SK-N-SH (cell line): ENCODE measurements at regions of chrX and their contacts with region 1.

Region 1: DNA sequence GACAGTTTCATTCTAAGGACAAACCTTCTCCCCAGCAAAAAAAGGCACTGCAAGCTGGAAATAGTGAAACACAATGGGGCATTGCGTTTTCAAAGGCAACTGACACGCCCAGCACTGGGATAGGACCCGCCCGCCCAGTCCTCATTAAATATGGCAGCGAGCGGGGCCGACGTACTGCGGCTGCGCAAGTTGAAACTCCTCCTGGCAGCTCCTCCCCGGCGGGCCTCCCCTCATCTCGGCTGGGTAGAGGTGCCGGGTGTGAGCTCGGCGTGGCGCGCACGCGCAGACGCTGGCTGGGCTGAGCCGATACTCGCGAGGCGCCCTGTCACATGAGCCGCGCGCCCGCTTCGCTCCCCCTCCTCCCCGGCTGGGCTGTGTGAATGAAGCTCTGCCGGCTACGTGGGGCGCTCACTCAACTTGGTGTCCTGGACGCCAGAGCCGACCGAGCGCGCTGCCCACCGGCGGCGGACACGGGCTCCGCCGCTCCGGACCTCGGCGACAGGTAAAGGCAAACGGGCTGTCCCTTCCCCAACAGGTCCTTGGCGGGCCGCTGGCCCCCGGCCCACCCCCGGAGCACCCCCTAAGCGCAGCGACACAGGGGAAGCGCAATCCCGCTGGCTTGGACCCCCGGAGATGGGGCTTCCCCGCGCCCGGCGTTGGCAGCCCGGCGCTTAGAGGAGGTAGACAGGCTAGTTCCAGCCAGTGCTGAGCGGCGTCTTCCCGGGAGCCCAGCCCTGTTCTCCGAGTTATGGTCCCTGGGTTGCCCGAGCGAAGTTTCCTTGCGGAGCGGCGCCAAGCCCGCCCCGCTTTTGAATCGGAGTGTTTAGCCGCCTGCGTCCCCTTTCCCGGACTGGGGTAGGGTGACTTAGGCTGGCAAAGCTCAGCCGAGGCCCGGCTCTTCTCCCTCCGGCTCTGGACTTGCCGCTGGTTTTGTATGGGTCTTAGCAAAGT is at the start of gene CLCN5:
- DNase-seq: peak; percentile 92
- H3K4me3 ChIP-seq: peak within 1 kb of the TSS; percentile 60 to 79
- H3K27ac ChIP-seq: peak within 1 kb of the TSS; percentile 41 to 62; a peak in 3 of 4 replicates
- H3K4me1 ChIP-seq: peaks cover 0 to 2% of the 10 kb centered on the region in 2 experiments; a peak in 1 of 4 replicates
- H3K27me3 ChIP-seq: no peaks in the 10 kb centered on the region
- CTCF ChIP-seq: no peak
- EP300 ChIP-seq: no peak
- RAD21 ChIP-seq: no peak
- polyA plus RNA-seq, gene CLCN5: 1.7 and 1.9 TPM in 2 replicates

Region 2: GRCh38 chrX:49884290-49884862 is 38.2 kb before region 1 on chrX:
- CTCF ChIA-PET with region 1: interaction called, 14 read pairs
- POLR2A ChIA-PET with region 1: no interaction called
- DNase-seq: peak; percentile 62
- H3K4me3 ChIP-seq: no peak overlapping the region
- H3K27ac ChIP-seq: no peak overlapping the region
- H3K4me1 ChIP-seq: peaks cover 0 to 16% of the 10 kb centered on the region in 2 experiments; a peak in 1 of 4 replicates
- H3K27me3 ChIP-seq: no peaks in the 10 kb centered on the region
- CTCF ChIP-seq: peak; percentile 81
- EP300 ChIP-seq: no peak
- RAD21 ChIP-seq: peak; percentile 53

Region 3: DNA sequence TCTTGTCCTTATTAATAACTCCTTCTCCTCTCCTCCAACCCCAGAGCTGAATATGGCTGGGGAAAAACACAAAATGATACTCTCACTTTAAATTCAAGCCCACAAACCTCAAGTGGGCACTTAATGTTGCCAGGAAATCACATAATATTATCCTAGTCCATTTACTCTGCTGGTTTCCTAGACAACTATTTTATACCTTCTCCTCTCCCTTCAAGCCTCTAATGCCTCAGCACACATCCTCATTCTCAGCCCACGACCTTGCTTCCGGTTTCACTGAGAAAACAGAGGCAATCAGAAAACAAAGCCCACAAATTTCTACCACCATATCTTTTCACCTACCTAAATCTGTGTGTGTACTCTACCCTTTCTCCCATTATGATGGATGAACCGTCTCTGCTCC is 12.2 kb before region 1 on chrX:
- CTCF ChIA-PET with region 1: interaction called, 17 read pairs
- POLR2A ChIA-PET with region 1: no interaction called
- DNase-seq: no peak
- H3K4me3 ChIP-seq: no peak overlapping the region
- H3K27ac ChIP-seq: no peak overlapping the region
- H3K4me1 ChIP-seq: no peaks in the 10 kb centered on the region
- H3K27me3 ChIP-seq: no peaks in the 10 kb centered on the region; the same call in 1 of the 2 replicates
- CTCF ChIP-seq: no peak
- EP300 ChIP-seq: no peak
- RAD21 ChIP-seq: no peak

Region 4: GRCh38 chrX:50036426-50036825 is 113.9 kb after region 1 on chrX:
- CTCF ChIA-PET with region 1: no interaction called
- POLR2A ChIA-PET with region 1: no interaction called
- DNase-seq: no peak
- H3K4me3 ChIP-seq: no peak overlapping the region
- H3K27ac ChIP-seq: no peak overlapping the region
- H3K4me1 ChIP-seq: no peaks in the 10 kb centered on the region
- H3K27me3 ChIP-seq: no peaks in the 10 kb centered on the region
- CTCF ChIP-seq: no peak
- EP300 ChIP-seq: no peak
- RAD21 ChIP-seq: no peak

Region 5: DNA sequence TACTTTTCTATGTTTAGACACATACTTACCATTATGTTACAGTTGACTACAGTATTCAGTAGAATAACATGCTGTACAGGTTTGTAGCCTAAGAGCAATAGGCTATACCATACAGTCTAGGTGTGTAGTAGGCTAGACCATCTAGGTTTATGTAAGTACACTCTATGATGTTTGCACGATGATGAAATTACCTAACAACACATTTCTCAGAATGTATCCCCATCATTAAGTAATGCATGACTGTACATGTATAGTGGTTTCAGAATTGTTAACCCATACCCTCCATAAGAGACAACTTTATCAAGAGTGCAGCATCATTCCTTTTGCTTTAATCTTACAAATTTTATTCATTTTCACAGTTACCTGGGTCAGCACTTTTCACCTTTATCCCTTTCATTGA is 126.7 kb after region 1 on chrX:
- CTCF ChIA-PET with region 1: no interaction called
- POLR2A ChIA-PET with region 1: no interaction called
- DNase-seq: no peak
- H3K4me3 ChIP-seq: no peak overlapping the region
- H3K27ac ChIP-seq: no peak overlapping the region
- H3K4me1 ChIP-seq: no peaks in the 10 kb centered on the region
- H3K27me3 ChIP-seq: no peaks in the 10 kb centered on the region
- CTCF ChIP-seq: no peak
- EP300 ChIP-seq: no peak
- RAD21 ChIP-seq: no peak

Region 6: DNA sequence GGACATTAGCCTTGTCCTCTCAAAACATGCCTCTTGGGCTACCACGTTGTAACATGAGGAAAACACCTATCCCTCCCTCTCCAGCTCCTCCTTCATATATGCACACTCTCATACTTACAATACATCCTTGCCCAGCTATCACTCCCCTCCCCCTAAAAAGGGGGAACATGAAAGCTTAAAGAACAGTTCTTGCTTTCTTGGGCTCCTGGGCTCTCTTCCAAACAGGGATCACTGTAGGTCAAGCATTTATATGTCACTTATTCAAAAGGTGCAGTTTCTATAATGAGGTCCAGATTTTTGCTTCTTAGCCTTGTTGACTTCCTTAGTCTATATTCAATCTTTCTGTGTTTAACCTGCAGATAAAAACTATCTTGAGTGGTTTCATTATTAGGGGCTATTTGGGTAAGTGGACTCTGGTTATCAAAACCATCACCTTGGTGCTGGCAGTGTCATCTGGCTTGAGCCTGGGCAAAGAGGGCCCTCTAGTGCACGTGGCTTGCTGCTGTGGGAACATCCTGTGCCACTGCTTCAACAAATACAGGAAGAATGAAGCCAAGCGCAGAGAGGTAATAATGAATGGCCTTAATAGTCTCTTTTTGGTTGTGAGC is 158.8 kb after region 1 on chrX:
- CTCF ChIA-PET with region 1: interaction called, 18 read pairs
- POLR2A ChIA-PET with region 1: no interaction called
- DNase-seq: peak; percentile 27
- H3K4me3 ChIP-seq: no peak overlapping the region; a peak in 1 of 4 replicates
- H3K27ac ChIP-seq: no peak overlapping the region
- H3K4me1 ChIP-seq: no peaks in the 10 kb centered on the region
- H3K27me3 ChIP-seq: no peaks in the 10 kb centered on the region
- CTCF ChIP-seq: peak; percentile 45
- EP300 ChIP-seq: no peak
- RAD21 ChIP-seq: peak; percentile 82